ENCODE measurements at regions of chr9 and their contacts with region 1.

Region 1: DNA sequence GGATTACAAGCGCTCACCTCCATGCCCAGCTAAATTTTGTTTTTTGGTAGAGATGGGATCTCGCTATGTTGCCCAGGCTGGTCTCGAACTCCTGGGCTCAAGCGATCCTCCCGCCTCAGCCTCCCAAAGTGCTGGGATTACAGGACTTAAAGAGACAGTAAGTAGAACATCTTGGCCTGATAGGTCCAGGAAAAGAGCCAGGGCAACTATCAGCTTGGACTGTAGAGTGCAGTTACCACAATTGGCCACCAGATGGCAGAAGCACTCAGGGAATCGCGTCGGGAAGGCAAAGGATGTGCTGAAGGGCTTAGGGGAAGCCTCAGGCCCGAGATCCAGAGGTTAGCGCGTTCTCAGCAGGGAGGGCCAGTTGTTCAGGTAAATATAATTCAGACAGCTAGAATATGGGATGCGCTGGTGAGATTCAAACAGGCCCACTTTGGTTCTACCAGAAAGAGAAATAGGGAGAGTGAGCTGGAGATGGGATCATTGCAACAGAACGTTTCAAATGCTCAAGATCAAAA is 21.5 kb downstream of the C9orf57 start:
- DNase-seq: peak; percentile 80
- H3K4me3 Mint-ChIP-seq: no peak overlapping the region
- H3K27ac Mint-ChIP-seq: no peak overlapping the region
- H3K4me1 Mint-ChIP-seq: peaks cover 5% of the 10 kb centered on the region
- H3K27me3 Mint-ChIP-seq: peaks cover 4% of the 10 kb centered on the region

Region 2: DNA sequence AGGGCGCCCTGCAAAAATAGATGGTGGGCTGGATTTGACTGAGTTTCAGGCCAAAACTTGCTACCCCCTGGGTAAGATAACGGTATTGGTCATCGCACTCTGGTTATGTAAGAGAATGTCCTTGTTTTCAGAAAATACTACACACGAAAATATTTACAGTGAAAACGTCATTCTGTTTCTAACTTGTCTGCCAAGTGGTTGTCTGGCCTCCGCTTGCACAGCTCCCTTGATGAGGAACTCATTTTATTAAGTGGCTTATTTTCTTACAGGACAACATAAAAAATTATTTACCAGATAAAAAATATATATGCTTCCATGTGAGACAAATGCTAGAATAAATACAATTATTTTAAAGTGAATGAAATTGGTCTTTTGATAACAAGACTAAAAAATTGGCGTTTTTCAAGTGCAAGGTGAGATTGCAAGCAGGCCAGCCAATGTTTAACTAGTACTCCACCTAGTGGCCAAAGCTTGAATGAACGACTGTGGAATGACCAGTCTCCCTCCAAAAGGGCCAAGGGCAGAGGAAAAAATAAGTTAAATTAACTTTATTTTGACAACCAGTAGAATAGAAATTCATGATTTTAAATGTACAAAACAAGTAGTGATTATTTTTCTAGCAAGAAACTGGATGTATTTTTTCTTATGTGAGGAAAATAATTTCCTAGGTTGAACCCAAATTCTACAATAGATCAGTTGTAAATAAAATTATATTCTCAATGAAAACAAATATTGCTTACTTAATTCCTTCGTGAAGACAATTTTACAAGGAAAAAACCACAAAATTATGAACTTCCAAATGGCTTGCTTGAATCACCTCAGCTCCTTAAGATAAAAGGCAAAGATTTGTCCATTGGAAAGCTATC is 232.9 kb after region 1 on chr9:
- CTCF ChIA-PET with region 1: interaction called, 223 read pairs
- POLR2A ChIA-PET with region 1: interaction called, 5 read pairs
- intact Hi-C with region 1: loop called (anchors 1 kb)
- DNase-seq: peak; percentile 42
- H3K4me3 Mint-ChIP-seq: no peak overlapping the region
- H3K27ac Mint-ChIP-seq: no peak overlapping the region
- H3K4me1 Mint-ChIP-seq: no peaks in the 10 kb centered on the region
- H3K27me3 Mint-ChIP-seq: no peaks in the 10 kb centered on the region

Region 3: DNA sequence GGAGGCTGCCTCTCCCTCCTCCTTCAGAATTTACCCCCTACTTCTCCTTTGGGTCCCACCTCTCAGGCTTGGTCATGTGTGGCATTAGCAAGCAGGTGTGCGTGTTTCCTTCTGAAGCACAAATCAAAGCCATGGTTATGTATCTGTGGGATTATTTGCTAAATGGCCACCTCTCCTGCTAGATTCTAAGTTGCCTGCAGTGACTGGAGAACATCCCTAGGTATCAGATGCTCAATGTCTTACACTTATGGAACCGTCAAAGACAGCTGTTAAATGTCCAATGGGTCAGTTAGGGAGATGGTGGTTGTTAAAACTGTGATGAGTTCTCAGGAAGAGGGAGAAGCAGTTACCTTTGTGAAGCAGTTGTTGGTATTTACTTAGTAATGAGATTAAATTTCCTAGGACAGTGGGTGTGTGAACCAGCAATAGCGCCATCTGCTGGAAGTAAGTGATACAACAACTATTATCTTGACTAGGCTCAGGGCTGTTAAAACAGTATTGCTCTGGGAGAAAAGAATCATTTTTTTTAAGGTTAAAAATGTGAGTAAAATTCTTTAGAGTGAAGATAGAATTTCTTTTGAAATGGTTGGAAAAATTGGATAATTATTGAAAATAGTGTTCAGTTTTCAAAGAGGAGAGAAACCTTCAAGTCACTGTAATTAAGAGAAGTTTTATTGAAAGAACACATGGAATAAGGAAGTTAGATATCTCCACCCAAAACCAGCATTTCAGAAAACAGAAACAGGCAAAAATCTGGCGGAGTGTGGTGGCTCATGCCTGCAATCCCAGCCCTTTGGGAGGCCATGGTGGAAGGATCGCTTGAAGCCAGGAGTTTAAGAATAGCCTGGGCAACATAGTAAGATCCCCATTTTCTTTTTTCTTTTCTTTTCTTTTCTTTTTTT is 553.8 kb after region 1 on chr9:
- CTCF ChIA-PET with region 1: no interaction called
- POLR2A ChIA-PET with region 1: no interaction called
- intact Hi-C with region 1: loop called (anchors 1 kb)
- DNase-seq: peak; percentile 30
- H3K4me3 Mint-ChIP-seq: no peak overlapping the region
- H3K27ac Mint-ChIP-seq: no peak overlapping the region
- H3K4me1 Mint-ChIP-seq: peaks cover 28% of the 10 kb centered on the region
- H3K27me3 Mint-ChIP-seq: no peaks in the 10 kb centered on the region

Region 4: GRCh38 chr9:72827950-72828731 is 789.2 kb after region 1 on chr9:
- CTCF ChIA-PET with region 1: interaction called, 24 read pairs
- POLR2A ChIA-PET with region 1: no interaction called
- intact Hi-C with region 1: no loop called
- DNase-seq: no peak
- H3K4me3 Mint-ChIP-seq: no peak overlapping the region
- H3K27ac Mint-ChIP-seq: no peak overlapping the region
- H3K4me1 Mint-ChIP-seq: no peaks in the 10 kb centered on the region
- H3K27me3 Mint-ChIP-seq: peaks cover 2% of the 10 kb centered on the region